AG04449 (cell line): ENCODE measurements at regions of chr2 and their contacts with region 1.

Region 1: GRCh38 chr2:152635635-152636298 is 81.5 kb downstream of the PRPF40A start:
- DNase-seq: no peak
- H3K4me3 ChIP-seq: no peak overlapping the region
- CTCF ChIP-seq: peak; percentile 61

Region 2: GRCh38 chr2:152175458-152176325 is 460.1 kb before region 1 on chr2 and contains the start of gene STAM2:
- CTCF ChIA-PET with region 1: interaction called, 169 read pairs
- POLR2A ChIA-PET with region 1: interaction called, 6 read pairs
- DNase-seq: peak; percentile 47
- H3K4me3 ChIP-seq: peak within 1 kb of the TSS; percentile 98
- CTCF ChIP-seq: peak; percentile 99

Region 3: GRCh38 chr2:152189622-152190495 is 445.9 kb before region 1 on chr2:
- CTCF ChIA-PET with region 1: interaction called, 90 read pairs
- POLR2A ChIA-PET with region 1: no interaction called
- DNase-seq: no peak
- H3K4me3 ChIP-seq: no peak overlapping the region
- CTCF ChIP-seq: peak; percentile 67

Region 4: GRCh38 chr2:152335010-152335725 is 300.6 kb before region 1 on chr2 and contains the start of gene FMNL2:
- CTCF ChIA-PET with region 1: interaction called, 21 read pairs
- POLR2A ChIA-PET with region 1: no interaction called
- DNase-seq: no peak
- H3K4me3 ChIP-seq: peak within 1 kb of the TSS; percentile 80
- CTCF ChIP-seq: no peak

Region 5: GRCh38 chr2:152525277-152525838 is 110.4 kb before region 1 on chr2:
- CTCF ChIA-PET with region 1: interaction called, 13 read pairs
- POLR2A ChIA-PET with region 1: no interaction called
- DNase-seq: no peak
- H3K4me3 ChIP-seq: peak overlapping the region; percentile 23; the same call in 1 of the 2 replicates
- CTCF ChIP-seq: no peak

Region 6: GRCh38 chr2:152620208-152620607 is 15.6 kb before region 1 on chr2:
- CTCF ChIA-PET with region 1: interaction called, 63 read pairs
- POLR2A ChIA-PET with region 1: no interaction called
- DNase-seq: no peak
- H3K4me3 ChIP-seq: no peak overlapping the region
- CTCF ChIP-seq: no peak